GM12878 (cell line): ENCODE measurements at regions of chr2 and their contacts with region 1.

Region 1: GRCh38 chr2:161160226-161161069 is at the start of gene TANK:
- DNase-seq: peak; percentile 83
- ATAC-seq: peak; percentile 90
- H3K4me3 ChIP-seq: peak within 1 kb of the TSS; percentile 93
- H3K27ac ChIP-seq: peak within 1 kb of the TSS; percentile 89
- H3K4me1 ChIP-seq: peaks cover 25% of the 10 kb centered on the region
- H3K27me3 ChIP-seq: no peaks in the 10 kb centered on the region
- CTCF ChIP-seq: no peak
- EP300 ChIP-seq: no peak
- POLR2A ChIP-seq: peak; percentile 96
- RAD21 ChIP-seq: no peak
- polyA plus RNA-seq, gene TANK: 102 to 127 TPM

Region 2: GRCh38 chr2:161172901-161173540 is 12.6 kb after region 1 on chr2:
- CTCF ChIA-PET with region 1: interaction called, 4 read pairs
- POLR2A ChIA-PET with region 1: interaction called, 4 read pairs
- RAD21 ChIA-PET with region 1: no interaction called
- SMC1A ChIA-PET with region 1: interaction called, 14 read pairs
- in situ Hi-C with region 1: no loop called
- intact Hi-C with region 1: loop called (anchors 1 kb)
- DNase-seq: no peak
- ATAC-seq: peak; percentile 70
- H3K4me3 ChIP-seq: peak overlapping the region; percentile 36; the same call in 1 of the 2 replicates
- H3K27ac ChIP-seq: peak overlapping the region; percentile 36
- H3K4me1 ChIP-seq: peaks cover 52% of the 10 kb centered on the region
- H3K27me3 ChIP-seq: no peaks in the 10 kb centered on the region
- CTCF ChIP-seq: no peak
- EP300 ChIP-seq: peak; percentile 8 to 35; a peak in 2 of 4 replicates
- POLR2A ChIP-seq: no peak
- RAD21 ChIP-seq: no peak

Region 3: DNA sequence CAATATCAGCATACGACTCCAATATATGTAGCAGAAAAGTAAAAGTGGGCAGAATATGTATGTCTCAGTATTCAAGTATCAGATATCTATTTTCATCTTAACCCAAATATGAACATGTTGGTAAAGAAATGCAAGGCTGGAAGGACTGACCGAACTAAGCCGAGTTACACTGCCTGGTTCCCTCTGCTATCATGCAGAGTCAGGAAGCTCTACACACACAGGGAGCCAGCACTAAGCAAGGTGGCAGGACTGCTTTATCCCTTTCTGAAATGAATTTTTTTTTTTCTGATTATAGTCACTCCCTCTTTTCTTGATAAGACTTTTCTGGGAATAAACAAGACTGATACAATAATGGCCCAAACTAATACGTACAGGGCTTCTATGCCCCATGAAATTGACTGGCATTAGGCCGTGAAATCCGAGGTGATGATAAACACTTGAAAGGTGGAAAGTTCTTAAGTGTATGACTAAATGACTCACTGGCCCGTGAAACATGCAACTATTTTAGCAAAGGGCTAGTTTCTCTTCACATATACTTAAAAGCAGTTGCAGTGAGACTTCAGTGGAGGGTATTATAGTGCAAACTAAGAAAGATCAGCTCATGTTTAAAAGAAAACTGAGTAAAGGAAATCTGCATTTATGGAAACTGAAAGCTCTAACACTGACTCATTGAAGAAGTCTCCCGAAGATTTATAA is 898.7 kb after region 1 on chr2:
- CTCF ChIA-PET with region 1: no interaction called
- POLR2A ChIA-PET with region 1: no interaction called
- RAD21 ChIA-PET with region 1: no interaction called
- SMC1A ChIA-PET with region 1: no interaction called
- in situ Hi-C with region 1: no loop called
- intact Hi-C with region 1: loop called (anchors 10 kb)
- DNase-seq: peak; percentile 84
- ATAC-seq: peak; percentile 82
- H3K4me3 ChIP-seq: peak overlapping the region; percentile 8; the same call in 1 of the 2 replicates
- H3K27ac ChIP-seq: peak overlapping the region; percentile 78
- H3K4me1 ChIP-seq: peaks cover 57% of the 10 kb centered on the region
- H3K27me3 ChIP-seq: no peaks in the 10 kb centered on the region
- CTCF ChIP-seq: no peak
- EP300 ChIP-seq: peak; percentile 37 to 79; a peak in 2 of 4 replicates
- POLR2A ChIP-seq: no peak
- RAD21 ChIP-seq: no peak